ENCODE measurements at regions of chr5 and their contacts with region 1.

Region 1: GRCh38 chr5:59367791-59368394 is 525.6 kb downstream of the PDE4D start:
- DNase-seq: peak in 2 of 3 donors; percentile 38 to 87
- ATAC-seq: peak; percentile 76
- H3K4me3 ChIP-seq: no peak overlapping the region
- H3K4me1 ChIP-seq: peaks cover 5% of the 10 kb centered on the region
- CTCF ChIP-seq: peak; percentile 44

Region 2: GRCh38 chr5:59193616-59194319 is 174.1 kb before region 1 on chr5:
- intact Hi-C with region 1: loop called (anchors 5 to 10 kb)
- DNase-seq: no peak
- ATAC-seq: peak; percentile 67
- H3K4me3 ChIP-seq: no peak overlapping the region
- H3K4me1 ChIP-seq: no peaks in the 10 kb centered on the region
- CTCF ChIP-seq: no peak

Region 3: GRCh38 chr5:59264639-59265240 is 103.2 kb before region 1 on chr5:
- intact Hi-C with region 1: loop called in 1 of 2 experiments (anchors 10 kb)
- DNase-seq: no peak
- ATAC-seq: no peak
- H3K4me3 ChIP-seq: no peak overlapping the region
- H3K4me1 ChIP-seq: peaks cover 12% of the 10 kb centered on the region
- CTCF ChIP-seq: no peak

Region 4: GRCh38 chr5:59587489-59588337 is 219.8 kb after region 1 on chr5:
- intact Hi-C with region 1: no loop called
- DNase-seq: peak; percentile 84 to 86 (median 85)
- ATAC-seq: peak; percentile 79
- H3K4me3 ChIP-seq: no peak overlapping the region
- H3K4me1 ChIP-seq: peaks cover 17% of the 10 kb centered on the region
- CTCF ChIP-seq: peak; percentile 11

Measured in mucosa of descending colon (tissue), 3 donors.